ENCODE measurements at regions of chr9 and their contacts with region 1.

Region 1: GRCh38 chr9:112361601-112362000 is 18.3 kb upstream of the HSDL2 start:
- DNase-seq: no peak
- H3K4me3 ChIP-seq: no peak overlapping the region
- H3K27ac ChIP-seq: no peak overlapping the region
- H3K4me1 ChIP-seq: peaks cover 3 to 4% of the 10 kb centered on the region in 2 donors
- H3K27me3 ChIP-seq: no peaks in the 10 kb centered on the region
- CTCF ChIP-seq: peak; percentile 50 to 61 (median 54)

Region 2: DNA sequence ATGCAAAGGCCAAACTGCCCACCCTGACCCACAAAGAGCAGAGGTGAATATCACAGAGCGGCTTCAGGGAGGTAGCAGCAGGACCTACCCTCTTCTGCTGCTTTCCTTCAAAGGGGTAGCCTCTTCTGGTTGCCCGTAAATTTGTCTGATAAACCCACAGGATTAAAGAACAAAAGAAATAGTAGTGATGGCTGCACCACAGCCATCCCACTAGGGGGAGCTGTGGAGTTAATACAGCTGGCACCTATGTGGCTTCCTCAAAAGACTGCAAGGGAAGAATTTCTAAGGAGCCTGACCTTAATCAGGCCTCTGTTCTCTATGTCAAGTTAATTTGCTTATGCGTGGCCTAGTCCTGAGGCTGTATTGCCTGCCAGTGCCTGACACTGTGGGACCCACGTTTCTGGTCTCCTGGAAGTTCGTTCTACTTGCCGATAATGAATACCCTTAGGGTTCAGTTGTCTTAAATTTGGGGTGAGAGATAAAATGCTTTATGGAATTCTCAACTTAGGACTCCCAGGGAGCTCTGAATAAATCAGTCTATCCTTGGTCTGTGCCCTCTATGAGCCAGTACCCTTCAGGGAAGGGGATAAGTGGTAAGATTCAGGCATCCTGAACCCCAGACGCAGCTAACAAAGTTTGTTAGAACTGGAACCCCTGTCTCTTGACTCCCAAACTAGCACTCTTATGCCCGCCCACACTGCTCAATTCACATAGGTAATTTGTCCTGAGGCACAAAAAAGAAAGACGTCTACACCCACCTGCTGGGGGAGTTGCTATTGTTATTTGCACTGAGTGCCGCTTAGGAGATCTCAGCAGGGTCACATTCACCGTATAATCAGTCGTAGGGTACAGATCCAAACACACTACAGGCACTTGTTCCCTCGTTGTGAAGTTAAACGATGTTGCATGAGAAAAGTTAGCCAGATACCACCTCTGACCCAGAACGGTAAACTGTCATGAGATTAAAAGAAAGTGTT is 263.6 kb before region 1 on chr9:
- intact Hi-C with region 1: loop called (anchors 1 kb)
- DNase-seq: peak in 1 of 2 donors; percentile 74
- H3K4me3 ChIP-seq: no peak overlapping the region
- H3K27ac ChIP-seq: no peak overlapping the region
- H3K4me1 ChIP-seq: no peaks in the 10 kb centered on the region
- H3K27me3 ChIP-seq: no peaks in the 10 kb centered on the region
- CTCF ChIP-seq: peak; percentile 70 to 89 (median 83)